CD4-positive, alpha-beta T cell (primary cell): ENCODE measurements at regions of chr11 and their contacts with region 1.

Region 1: DNA sequence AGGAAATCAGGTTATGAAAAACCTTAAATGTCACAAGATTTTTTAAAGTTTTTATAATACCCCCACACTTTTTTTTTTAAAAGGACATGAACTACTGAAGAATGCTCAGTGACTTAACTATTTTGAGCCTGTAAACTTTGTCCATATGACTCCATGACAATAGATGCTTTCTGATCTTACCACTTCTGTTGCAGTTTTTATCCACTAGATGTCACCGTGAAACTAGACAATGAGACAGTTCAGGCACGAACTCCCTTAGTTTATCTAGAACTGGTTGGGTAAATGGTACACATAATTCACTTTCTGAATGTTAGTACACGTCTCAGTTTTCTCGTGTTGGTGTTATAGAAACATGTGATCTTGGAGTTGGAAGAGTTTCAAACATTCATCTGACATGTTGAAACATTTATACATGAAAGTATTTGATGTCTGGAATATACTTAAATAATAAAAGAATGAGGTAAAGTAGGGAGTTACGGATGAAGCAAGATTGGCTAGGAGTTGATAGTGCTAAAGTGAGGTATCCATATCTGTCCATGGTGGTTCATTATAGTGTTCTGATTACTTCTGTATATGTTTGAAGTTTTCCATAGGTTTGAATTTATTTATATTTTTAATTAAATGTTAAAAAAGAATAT is 8.1 kb downstream of the CCDC15 start:
- DNase-seq: peak in 4 of 14 experiments; percentile 16 to 82 (median 80)
- ATAC-seq: peak; percentile 98
- H3K4me3 ChIP-seq: no peak overlapping the region
- H3K4me3 Mint-ChIP-seq: no peak overlapping the region
- H3K27ac ChIP-seq: no peak overlapping the region
- H3K27ac Mint-ChIP-seq: no peak overlapping the region
- H3K4me1 ChIP-seq: no peaks in the 10 kb centered on the region
- H3K4me1 Mint-ChIP-seq: no peaks in the 10 kb centered on the region
- H3K27me3 ChIP-seq: no peaks in the 10 kb centered on the region
- H3K27me3 Mint-ChIP-seq: no peaks in the 10 kb centered on the region
- CTCF ChIP-seq: peak; percentile 82

Region 2: GRCh38 chr11:125345421-125346178 is 383.5 kb after region 1 on chr11:
- CTCF ChIA-PET with region 1: interaction called, 3 read pairs
- POLR2A ChIA-PET with region 1: no interaction called
- intact Hi-C with region 1: loop called (anchors 1 to 2 kb)
- DNase-seq: peak in 11 of 14 experiments; percentile 3 to 61 (median 21)
- ATAC-seq: peak; percentile 32
- H3K4me3 ChIP-seq: no peak overlapping the region
- H3K4me3 Mint-ChIP-seq: no peak overlapping the region
- H3K27ac ChIP-seq: no peak overlapping the region
- H3K27ac Mint-ChIP-seq: no peak overlapping the region
- H3K4me1 ChIP-seq: peaks cover 3% of the 10 kb centered on the region
- H3K4me1 Mint-ChIP-seq: no peaks in the 10 kb centered on the region
- H3K27me3 ChIP-seq: no peaks in the 10 kb centered on the region
- H3K27me3 Mint-ChIP-seq: peaks cover 23% of the 10 kb centered on the region
- CTCF ChIP-seq: peak; percentile 58

Region 3: DNA sequence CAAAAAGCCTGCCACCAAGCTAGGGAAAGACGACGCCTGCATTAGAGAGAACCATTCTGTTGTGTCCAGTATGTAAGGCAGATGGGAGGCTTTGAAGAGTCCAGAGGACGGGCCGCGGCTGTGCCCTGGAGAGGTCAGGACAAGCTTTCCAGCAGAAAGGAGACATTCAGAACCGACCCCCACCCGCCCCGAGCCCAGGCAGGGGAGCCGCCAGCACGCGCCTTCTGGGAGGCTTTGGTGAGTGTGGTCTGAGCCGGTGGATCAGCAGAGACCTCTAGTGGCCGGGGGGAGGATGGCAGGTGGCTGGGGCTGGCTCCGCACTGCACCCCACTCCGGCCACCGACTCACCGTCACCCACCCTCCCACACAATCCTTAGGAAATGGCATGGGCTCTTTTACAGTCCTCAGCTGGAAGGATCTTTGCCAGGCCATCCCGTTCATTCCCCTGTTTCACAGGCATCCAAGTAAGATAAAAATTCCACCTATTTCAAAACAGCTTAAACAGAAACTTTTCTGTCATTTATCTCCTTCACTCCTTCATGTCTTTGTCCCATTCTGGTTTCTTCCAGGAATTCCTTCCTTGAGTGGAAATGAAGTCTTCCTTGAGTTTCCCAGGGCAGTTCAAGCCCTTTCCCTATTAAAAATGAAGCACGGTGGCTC is 442.8 kb after region 1 on chr11:
- CTCF ChIA-PET with region 1: no interaction called
- POLR2A ChIA-PET with region 1: no interaction called
- intact Hi-C with region 1: loop called (anchors 5 to 10 kb)
- DNase-seq: peak; percentile 28 to 75 (median 56)
- ATAC-seq: peak; percentile 88
- H3K4me3 ChIP-seq: no peak overlapping the region
- H3K4me3 Mint-ChIP-seq: no peak overlapping the region
- H3K27ac ChIP-seq: no peak overlapping the region
- H3K27ac Mint-ChIP-seq: no peak overlapping the region
- H3K4me1 ChIP-seq: peaks cover 5% of the 10 kb centered on the region
- H3K4me1 Mint-ChIP-seq: peaks cover 7% of the 10 kb centered on the region
- H3K27me3 ChIP-seq: peaks cover 17 to 27% of the 10 kb centered on the region in 2 experiments
- H3K27me3 Mint-ChIP-seq: peaks cover 78% of the 10 kb centered on the region
- CTCF ChIP-seq: peak; percentile 83